MCF 10A (cell line): ENCODE measurements at regions of chr3 and their contacts with region 1.

Region 1: DNA sequence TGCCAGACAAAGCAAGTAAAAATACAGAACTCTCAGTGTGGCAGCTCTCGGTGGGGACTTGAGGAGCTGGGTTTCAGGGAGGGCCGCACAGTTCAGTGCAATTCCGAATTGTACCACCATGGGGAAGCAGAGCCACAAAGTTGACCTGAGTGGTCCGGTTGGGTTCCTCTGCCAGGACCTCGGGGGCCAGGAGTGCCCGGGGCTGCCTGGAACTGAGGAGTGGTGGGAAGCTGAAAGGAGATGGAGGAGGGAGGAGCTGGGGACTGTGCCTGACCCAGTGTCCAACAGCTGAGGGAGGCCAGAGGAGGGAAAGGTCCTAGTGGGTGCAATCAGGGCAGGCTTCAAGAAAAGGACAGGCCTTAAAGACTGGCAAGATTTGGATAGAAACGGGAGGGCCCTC is 32.2 kb upstream of the TRH start:
- DNase-seq: peak; percentile 56
- H3K4me3 Mint-ChIP-seq: no peak overlapping the region
- H3K27ac Mint-ChIP-seq: no peak overlapping the region
- H3K4me1 Mint-ChIP-seq: no peaks in the 10 kb centered on the region
- H3K27me3 Mint-ChIP-seq: peaks cover 24% of the 10 kb centered on the region
- CTCF ChIP-seq: peak; percentile 55

Region 2: GRCh38 chr3:129732200-129732876 is 210.0 kb before region 1 on chr3:
- CTCF ChIA-PET with region 1: no interaction called
- POLR2A ChIA-PET with region 1: no interaction called
- intact Hi-C with region 1: no loop called
- DNase-seq: no peak
- H3K4me3 Mint-ChIP-seq: no peak overlapping the region
- H3K27ac Mint-ChIP-seq: no peak overlapping the region
- H3K4me1 Mint-ChIP-seq: peaks cover 13% of the 10 kb centered on the region
- H3K27me3 Mint-ChIP-seq: no peaks in the 10 kb centered on the region
- CTCF ChIP-seq: no peak

Region 3: GRCh38 chr3:129794311-129795185 is 147.7 kb before region 1 on chr3:
- CTCF ChIA-PET with region 1: no interaction called
- POLR2A ChIA-PET with region 1: no interaction called
- intact Hi-C with region 1: no loop called
- DNase-seq: peak; percentile 84
- H3K4me3 Mint-ChIP-seq: peak overlapping the region; percentile 70
- H3K27ac Mint-ChIP-seq: peak overlapping the region; percentile 82
- H3K4me1 Mint-ChIP-seq: peaks cover 33% of the 10 kb centered on the region
- H3K27me3 Mint-ChIP-seq: no peaks in the 10 kb centered on the region
- CTCF ChIP-seq: no peak

Region 4: GRCh38 chr3:129954514-129954913 is 12.2 kb after region 1 on chr3:
- CTCF ChIA-PET with region 1: interaction called, 15 read pairs
- POLR2A ChIA-PET with region 1: interaction called, 3 read pairs
- intact Hi-C with region 1: no loop called
- DNase-seq: no peak
- H3K4me3 Mint-ChIP-seq: no peak overlapping the region
- H3K27ac Mint-ChIP-seq: no peak overlapping the region
- H3K4me1 Mint-ChIP-seq: no peaks in the 10 kb centered on the region
- H3K27me3 Mint-ChIP-seq: peaks cover 42% of the 10 kb centered on the region
- CTCF ChIP-seq: no peak

Region 5: DNA sequence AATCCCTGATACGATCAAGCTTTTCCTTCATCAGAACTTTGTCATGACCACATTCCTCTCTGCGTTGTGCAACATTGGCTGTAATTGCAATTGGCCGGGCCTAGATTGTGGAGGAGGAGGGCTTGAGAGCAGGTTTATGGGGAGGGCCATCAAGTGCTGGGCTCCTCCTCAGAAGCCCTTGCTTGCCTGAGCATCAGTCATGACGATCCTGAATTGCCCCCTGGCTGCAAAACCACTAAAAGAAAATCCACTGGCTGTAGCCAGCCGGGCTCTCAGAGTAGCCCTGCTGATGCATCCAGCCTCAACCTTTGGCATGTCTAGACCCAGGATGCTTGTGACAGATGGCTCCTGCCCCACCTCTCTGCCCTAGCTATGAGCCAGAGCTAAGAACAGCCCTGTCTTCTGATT is 18.8 kb after region 1 on chr3:
- CTCF ChIA-PET with region 1: interaction called, 14 read pairs
- POLR2A ChIA-PET with region 1: no interaction called
- intact Hi-C with region 1: no loop called
- DNase-seq: no peak
- H3K4me3 Mint-ChIP-seq: no peak overlapping the region
- H3K27ac Mint-ChIP-seq: no peak overlapping the region
- H3K4me1 Mint-ChIP-seq: no peaks in the 10 kb centered on the region
- H3K27me3 Mint-ChIP-seq: peaks cover 34% of the 10 kb centered on the region
- CTCF ChIP-seq: no peak

Region 6: DNA sequence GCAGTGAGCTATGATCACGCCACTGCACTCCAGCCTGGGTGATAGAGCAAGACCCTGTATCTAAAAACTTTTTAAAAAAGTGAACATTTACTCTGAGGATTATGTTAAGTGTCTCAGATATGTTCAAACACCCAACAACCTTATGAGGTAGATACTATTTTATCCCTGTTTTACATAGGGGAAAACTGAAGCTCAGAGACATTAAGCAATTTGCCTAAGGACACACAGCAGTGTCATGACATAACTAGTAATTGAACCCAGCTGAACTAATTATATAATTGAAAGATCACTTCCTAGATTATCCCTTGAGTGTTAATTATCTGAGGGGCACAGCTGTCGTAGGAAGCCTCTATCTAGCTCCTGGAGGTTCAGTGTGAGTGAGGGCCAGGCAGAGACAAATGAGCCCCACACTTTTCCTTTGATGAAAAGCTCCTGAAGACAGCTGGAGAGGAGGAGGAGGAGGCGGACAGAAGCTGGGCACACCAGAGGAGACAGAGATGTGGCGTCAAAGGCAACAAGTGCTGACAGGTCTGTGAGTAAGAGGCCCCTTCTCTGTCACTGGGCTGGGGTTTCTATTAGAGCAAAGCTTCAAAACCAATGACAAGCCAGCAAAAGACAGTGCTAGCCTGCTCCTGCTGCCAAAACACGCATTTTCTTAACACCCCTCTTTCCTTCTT is 52.7 kb after region 1 on chr3:
- CTCF ChIA-PET with region 1: interaction called, 14 read pairs
- POLR2A ChIA-PET with region 1: no interaction called
- intact Hi-C with region 1: no loop called
- DNase-seq: peak; percentile 46
- H3K4me3 Mint-ChIP-seq: no peak overlapping the region
- H3K27ac Mint-ChIP-seq: no peak overlapping the region
- H3K4me1 Mint-ChIP-seq: no peaks in the 10 kb centered on the region
- H3K27me3 Mint-ChIP-seq: peaks cover 50% of the 10 kb centered on the region
- CTCF ChIP-seq: no peak

Region 7: GRCh38 chr3:130010556-130010955 is 68.3 kb after region 1 on chr3:
- CTCF ChIA-PET with region 1: interaction called, 16 read pairs
- POLR2A ChIA-PET with region 1: no interaction called
- intact Hi-C with region 1: no loop called
- DNase-seq: no peak
- H3K4me3 Mint-ChIP-seq: no peak overlapping the region
- H3K27ac Mint-ChIP-seq: no peak overlapping the region
- H3K4me1 Mint-ChIP-seq: no peaks in the 10 kb centered on the region
- H3K27me3 Mint-ChIP-seq: peaks cover 48% of the 10 kb centered on the region
- CTCF ChIP-seq: no peak

Region 8: DNA sequence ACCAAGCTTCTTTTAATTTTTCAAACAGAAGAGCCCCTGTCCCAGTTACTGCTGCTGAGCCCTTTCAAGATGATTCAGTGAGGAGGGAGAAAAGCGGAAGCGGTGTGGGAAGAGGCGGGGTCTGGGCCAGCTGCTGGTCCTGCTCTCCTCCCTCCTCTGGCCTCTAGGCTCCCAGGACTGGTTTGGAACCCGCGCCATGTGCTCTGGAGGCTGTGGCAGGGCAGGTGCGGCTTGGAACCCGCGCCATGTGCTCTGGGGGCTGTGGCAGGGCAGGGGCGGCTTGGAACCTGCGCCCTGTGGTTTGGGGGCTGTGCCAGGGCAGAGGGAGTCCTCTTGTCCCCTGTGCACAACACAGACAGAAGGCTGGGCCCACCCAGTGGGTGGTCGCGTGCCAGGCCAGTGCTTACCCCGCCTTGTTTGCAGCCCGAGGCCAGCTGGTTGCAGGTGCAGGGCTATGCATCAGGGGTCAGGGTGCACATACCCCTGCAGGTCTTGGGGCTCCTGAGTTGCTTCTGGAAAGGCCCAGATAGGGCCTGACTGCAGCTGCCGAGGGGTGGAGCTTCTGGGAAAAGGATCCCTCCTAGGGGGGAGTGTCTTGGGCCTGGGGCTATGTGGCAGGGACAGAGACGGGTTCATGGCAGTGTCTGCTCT is 151.6 kb after region 1 on chr3:
- CTCF ChIA-PET with region 1: interaction called, 39 read pairs
- POLR2A ChIA-PET with region 1: interaction called, 4 read pairs
- intact Hi-C with region 1: loop called (anchors 5 kb)
- DNase-seq: no peak
- H3K4me3 Mint-ChIP-seq: no peak overlapping the region
- H3K27ac Mint-ChIP-seq: no peak overlapping the region
- H3K4me1 Mint-ChIP-seq: no peaks in the 10 kb centered on the region
- H3K27me3 Mint-ChIP-seq: no peaks in the 10 kb centered on the region
- CTCF ChIP-seq: no peak

Region 9: DNA sequence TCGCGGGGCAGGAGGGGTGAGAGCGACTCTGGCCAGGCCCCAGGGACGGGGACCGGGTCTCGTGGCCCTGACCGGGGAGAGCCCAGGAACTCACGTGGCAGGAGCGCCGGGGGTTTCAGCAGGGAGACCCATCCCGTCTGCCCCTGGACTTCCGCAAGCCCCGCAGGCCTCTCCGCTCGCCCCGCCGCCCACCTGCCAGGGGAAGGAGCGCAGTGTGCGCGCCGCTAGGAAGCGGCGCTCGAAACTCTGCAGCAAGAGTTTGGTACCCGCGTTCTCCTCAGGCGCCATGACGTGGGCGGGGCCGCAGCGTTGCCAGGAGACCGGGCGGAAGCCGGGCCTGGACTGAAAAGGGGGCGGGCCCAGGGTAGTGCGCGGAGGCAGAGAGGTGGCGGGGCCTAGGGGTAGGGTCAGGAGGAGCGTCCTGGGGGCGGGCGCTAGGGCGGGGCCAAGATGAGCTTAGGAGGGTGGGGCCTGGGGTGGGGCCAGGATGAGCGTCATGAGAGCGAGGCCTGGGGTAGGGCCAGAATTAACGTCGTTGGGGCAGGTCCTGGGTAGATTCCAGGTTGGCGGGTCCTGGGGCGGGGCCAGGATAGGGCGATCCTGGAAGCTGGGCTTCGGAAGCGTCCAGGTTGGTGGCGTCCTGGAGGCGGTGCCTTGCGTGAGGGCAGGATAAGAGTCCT is 169.0 kb after region 1 on chr3:
- CTCF ChIA-PET with region 1: interaction called, 67 read pairs
- POLR2A ChIA-PET with region 1: no interaction called
- intact Hi-C with region 1: no loop called
- DNase-seq: peak; percentile 97
- H3K4me3 Mint-ChIP-seq: peak overlapping the region; percentile 94
- H3K27ac Mint-ChIP-seq: peak overlapping the region; percentile 90
- H3K4me1 Mint-ChIP-seq: peaks cover 6% of the 10 kb centered on the region
- H3K27me3 Mint-ChIP-seq: no peaks in the 10 kb centered on the region
- CTCF ChIP-seq: no peak

Region 10: GRCh38 chr3:130341388-130341787 is 399.1 kb after region 1 on chr3:
- CTCF ChIA-PET with region 1: no interaction called
- POLR2A ChIA-PET with region 1: no interaction called
- intact Hi-C with region 1: no loop called
- DNase-seq: peak; percentile 58
- H3K4me3 Mint-ChIP-seq: no peak overlapping the region
- H3K27ac Mint-ChIP-seq: no peak overlapping the region
- H3K4me1 Mint-ChIP-seq: no peaks in the 10 kb centered on the region
- H3K27me3 Mint-ChIP-seq: peaks cover 35% of the 10 kb centered on the region
- CTCF ChIP-seq: no peak